ENCODE measurements at regions of chr2 and their contacts with region 1.

Region 1: GRCh38 chr2:126672980-126673605 is 17.1 kb downstream of the GYPC start:
- DNase-seq: no peak
- H3K4me3 ChIP-seq: no peak overlapping the region
- H3K27ac ChIP-seq: no peak overlapping the region
- H3K4me1 ChIP-seq: peaks cover 4% of the 10 kb centered on the region
- H3K27me3 ChIP-seq: no peaks in the 10 kb centered on the region
- CTCF ChIP-seq: no peak
- EP300 ChIP-seq: no peak
- POLR2A ChIP-seq: no peak

Region 2: DNA sequence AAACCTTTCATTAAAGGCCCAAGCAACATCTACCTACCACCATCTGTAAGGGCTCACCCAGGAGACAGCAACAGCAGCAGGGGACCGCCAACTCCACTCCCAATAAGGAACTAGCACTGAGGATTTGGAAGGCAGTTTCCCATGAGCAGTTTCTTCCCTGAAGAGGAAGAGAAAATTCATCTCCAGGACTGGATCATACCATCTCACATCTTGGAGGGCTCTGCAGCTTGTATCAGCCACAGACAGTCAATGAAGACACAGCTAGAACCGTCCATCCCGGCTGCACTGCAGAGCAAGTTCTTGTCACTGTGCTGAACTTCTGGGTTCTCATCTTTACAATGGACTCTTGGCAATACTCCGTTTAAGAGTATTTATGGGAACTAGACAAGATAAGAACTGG is 20.0 kb before region 1 on chr2:
- intact Hi-C with region 1: loop called in 1 of 4 experiments (anchors 2 kb)
- DNase-seq: no peak
- H3K4me3 ChIP-seq: no peak overlapping the region
- H3K27ac ChIP-seq: no peak overlapping the region
- H3K4me1 ChIP-seq: peaks cover 12% of the 10 kb centered on the region
- H3K27me3 ChIP-seq: no peaks in the 10 kb centered on the region
- CTCF ChIP-seq: no peak
- EP300 ChIP-seq: no peak
- POLR2A ChIP-seq: no peak

Measured in ovary (tissue), 10 donors.